ENCODE measurements at regions of chr9 and their contacts with region 1.

Region 1: GRCh38 chr9:98775831-98776441 is 20.4 kb downstream of the ANKS6 start:
- DNase-seq: no peak
- ATAC-seq: peak; percentile 91
- H3K4me3 ChIP-seq: no peak overlapping the region
- H3K27ac ChIP-seq: no peak overlapping the region
- H3K4me1 ChIP-seq: no peaks in the 10 kb centered on the region
- H3K27me3 ChIP-seq: no peaks in the 10 kb centered on the region
- CTCF ChIP-seq: peak; percentile 76 to 79 (median 76)
- EP300 ChIP-seq: no peak
- POLR2A ChIP-seq: no peak
- RAD21 ChIP-seq: peak; percentile 90

Region 2: GRCh38 chr9:98315551-98316060 is 460.3 kb before region 1 on chr9:
- CTCF ChIA-PET with region 1: interaction called, 97 read pairs
- POLR2A ChIA-PET with region 1: no interaction called
- RAD21 ChIA-PET with region 1: interaction called, 24 read pairs
- SMC1A ChIA-PET with region 1: interaction called, 13 read pairs
- in situ Hi-C with region 1: loop called (anchors 5 kb)
- intact Hi-C with region 1: loop called (anchors 1 kb)
- DNase-seq: peak; percentile 26
- ATAC-seq: peak; percentile 95
- H3K4me3 ChIP-seq: no peak overlapping the region
- H3K27ac ChIP-seq: no peak overlapping the region
- H3K4me1 ChIP-seq: no peaks in the 10 kb centered on the region
- H3K27me3 ChIP-seq: no peaks in the 10 kb centered on the region
- CTCF ChIP-seq: peak; percentile 91 to 94 (median 94)
- EP300 ChIP-seq: no peak
- POLR2A ChIP-seq: no peak
- RAD21 ChIP-seq: peak; percentile 94

Region 3: GRCh38 chr9:98429613-98430012 is 346.3 kb before region 1 on chr9:
- CTCF ChIA-PET with region 1: no interaction called
- POLR2A ChIA-PET with region 1: no interaction called
- RAD21 ChIA-PET with region 1: no interaction called
- SMC1A ChIA-PET with region 1: no interaction called
- in situ Hi-C with region 1: no loop called
- intact Hi-C with region 1: no loop called
- DNase-seq: no peak
- ATAC-seq: no peak
- H3K4me3 ChIP-seq: no peak overlapping the region
- H3K27ac ChIP-seq: no peak overlapping the region
- H3K4me1 ChIP-seq: no peaks in the 10 kb centered on the region
- H3K27me3 ChIP-seq: no peaks in the 10 kb centered on the region; a peak in 2 of 4 replicates
- CTCF ChIP-seq: no peak
- EP300 ChIP-seq: no peak
- POLR2A ChIP-seq: no peak
- RAD21 ChIP-seq: no peak

Region 4: GRCh38 chr9:98791147-98792095 is 15.5 kb after region 1 on chr9:
- CTCF ChIA-PET with region 1: interaction called, 15 read pairs
- POLR2A ChIA-PET with region 1: interaction called, 5 read pairs
- RAD21 ChIA-PET with region 1: no interaction called
- SMC1A ChIA-PET with region 1: interaction called, 3 read pairs
- in situ Hi-C with region 1: no loop called
- intact Hi-C with region 1: no loop called
- DNase-seq: no peak
- ATAC-seq: peak; percentile 95
- H3K4me3 ChIP-seq: no peak overlapping the region
- H3K27ac ChIP-seq: no peak overlapping the region
- H3K4me1 ChIP-seq: peaks cover 3% of the 10 kb centered on the region; the same call in 1 of the 2 replicates
- H3K27me3 ChIP-seq: peaks cover 0 to 2% of the 10 kb centered on the region in 2 experiments; a peak in 1 of 4 replicates
- CTCF ChIP-seq: peak; percentile 90 to 97 (median 96)
- EP300 ChIP-seq: no peak
- POLR2A ChIP-seq: no peak
- RAD21 ChIP-seq: peak; percentile 82